ENCODE measurements at regions of chr10 and their contacts with region 1.

Region 1: GRCh38 chr10:119103903-119104652 is at the start of gene DENND10:
- DNase-seq: peak; percentile 90
- ATAC-seq: peak; percentile 92
- H3K4me3 Mint-ChIP-seq: peak within 1 kb of the TSS; percentile 70
- H3K27ac Mint-ChIP-seq: no peak within 1 kb of the TSS
- H3K4me1 Mint-ChIP-seq: peaks cover 10% of the 10 kb centered on the region
- H3K27me3 Mint-ChIP-seq: no peaks in the 10 kb centered on the region
- total RNA-seq, gene DENND10: 20.5 to 21.9 TPM

Region 2: GRCh38 chr10:119028900-119029612 is 75.0 kb before region 1 on chr10:
- CTCF ChIA-PET with region 1: no interaction called
- POLR2A ChIA-PET with region 1: no interaction called
- intact Hi-C with region 1: loop called in 1 of 2 experiments (anchors 1 kb)
- DNase-seq: peak; percentile 85
- ATAC-seq: peak; percentile 74
- H3K4me3 Mint-ChIP-seq: peak overlapping the region; percentile 47
- H3K27ac Mint-ChIP-seq: no peak overlapping the region
- H3K4me1 Mint-ChIP-seq: peaks cover 16% of the 10 kb centered on the region
- H3K27me3 Mint-ChIP-seq: no peaks in the 10 kb centered on the region

Region 3: DNA sequence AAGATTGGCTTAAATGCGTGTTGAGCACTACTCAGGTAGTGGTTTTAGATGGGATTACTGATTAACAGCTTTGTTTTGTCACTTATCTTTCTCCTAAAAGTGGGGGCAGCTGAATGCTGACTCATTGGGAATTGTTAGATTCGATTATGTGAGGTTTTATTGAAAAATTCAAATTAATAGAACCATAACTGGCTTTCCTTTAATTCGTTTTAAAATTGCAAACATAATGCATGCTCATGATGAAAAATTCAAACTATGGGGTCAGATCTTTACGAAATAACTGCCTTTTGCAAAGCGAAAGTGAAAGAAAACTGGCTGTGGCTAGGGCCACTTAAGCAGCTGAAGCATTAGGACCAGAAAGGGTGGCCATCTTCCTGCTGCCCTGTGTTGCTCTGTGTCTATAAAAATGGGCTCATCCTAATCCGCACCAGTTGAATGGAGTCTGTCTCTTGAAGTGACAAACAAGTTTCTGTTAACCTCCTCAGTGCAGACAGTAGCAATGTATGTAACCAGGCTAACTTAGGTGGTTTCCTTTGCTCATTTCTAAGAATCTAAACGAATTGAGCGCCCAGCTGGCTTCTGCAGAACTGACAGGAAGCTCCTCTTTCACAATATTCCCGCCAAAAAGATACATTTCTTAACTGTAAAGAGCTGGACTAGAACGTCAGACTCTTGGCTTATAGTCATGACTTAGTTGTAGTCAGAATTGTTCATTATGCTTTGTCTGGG is 27.6 kb after region 1 on chr10:
- CTCF ChIA-PET with region 1: interaction called, 5 read pairs
- POLR2A ChIA-PET with region 1: interaction called, 3 read pairs
- intact Hi-C with region 1: loop called in 1 of 2 experiments (anchors 1 kb)
- DNase-seq: peak; percentile 75
- ATAC-seq: peak; percentile 84
- H3K4me3 Mint-ChIP-seq: peak overlapping the region; percentile 78
- H3K27ac Mint-ChIP-seq: peak overlapping the region; percentile 99
- H3K4me1 Mint-ChIP-seq: peaks cover 50% of the 10 kb centered on the region
- H3K27me3 Mint-ChIP-seq: no peaks in the 10 kb centered on the region

Region 4: GRCh38 chr10:119178372-119179119 is 74.5 kb after region 1 on chr10 and contains the start of gene PRDX3:
- CTCF ChIA-PET with region 1: no interaction called
- POLR2A ChIA-PET with region 1: no interaction called
- intact Hi-C with region 1: loop called in 1 of 2 experiments (anchors 1 kb)
- DNase-seq: peak; percentile 98
- ATAC-seq: peak; percentile 95
- H3K4me3 Mint-ChIP-seq: peak within 1 kb of the TSS; percentile 88
- H3K27ac Mint-ChIP-seq: peak within 1 kb of the TSS; percentile 95
- H3K4me1 Mint-ChIP-seq: peaks cover 36% of the 10 kb centered on the region
- H3K27me3 Mint-ChIP-seq: no peaks in the 10 kb centered on the region
- total RNA-seq, gene PRDX3: 160 to 217 TPM

Region 5: GRCh38 chr10:119189811-119190282 is 85.8 kb after region 1 on chr10:
- CTCF ChIA-PET with region 1: no interaction called
- POLR2A ChIA-PET with region 1: no interaction called
- intact Hi-C with region 1: no loop called
- DNase-seq: no peak
- ATAC-seq: no peak
- H3K4me3 Mint-ChIP-seq: no peak overlapping the region
- H3K27ac Mint-ChIP-seq: no peak overlapping the region
- H3K4me1 Mint-ChIP-seq: peaks cover 21% of the 10 kb centered on the region
- H3K27me3 Mint-ChIP-seq: no peaks in the 10 kb centered on the region

Region 6: DNA sequence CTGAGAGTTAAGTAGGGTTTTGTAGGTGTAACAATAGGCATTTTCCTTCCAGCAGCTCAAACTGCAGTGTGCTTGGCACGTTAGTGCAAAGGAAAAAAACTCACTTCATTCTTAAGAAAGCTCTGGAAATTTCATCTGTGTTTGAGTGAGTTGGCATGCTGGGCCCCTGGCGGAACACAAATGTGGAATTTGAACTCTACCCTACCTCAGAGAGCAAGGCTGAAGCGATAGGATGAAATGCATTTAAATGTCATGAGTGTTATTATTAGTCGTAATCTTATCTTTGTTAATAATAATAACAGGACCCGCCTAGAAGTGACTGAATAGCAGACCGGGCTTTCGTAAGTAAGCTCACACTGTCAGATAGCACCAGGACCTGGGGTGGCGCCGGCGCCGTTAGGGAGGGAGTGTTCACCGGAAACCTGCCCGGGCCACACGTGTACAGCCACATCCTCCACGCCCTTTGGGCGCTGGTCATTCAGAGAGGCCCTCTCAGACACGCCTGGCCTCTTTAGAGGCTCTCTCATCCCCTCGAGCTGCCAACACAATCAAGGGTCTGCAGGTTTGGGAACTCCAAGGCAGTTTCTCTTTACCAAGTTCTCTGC is 166.8 kb after region 1 on chr10:
- CTCF ChIA-PET with region 1: no interaction called
- POLR2A ChIA-PET with region 1: no interaction called
- intact Hi-C with region 1: no loop called
- DNase-seq: peak; percentile 78
- ATAC-seq: peak; percentile 59
- H3K4me3 Mint-ChIP-seq: peak overlapping the region; percentile 34
- H3K27ac Mint-ChIP-seq: peak overlapping the region; percentile 77
- H3K4me1 Mint-ChIP-seq: peaks cover 58% of the 10 kb centered on the region
- H3K27me3 Mint-ChIP-seq: no peaks in the 10 kb centered on the region

Region 7: DNA sequence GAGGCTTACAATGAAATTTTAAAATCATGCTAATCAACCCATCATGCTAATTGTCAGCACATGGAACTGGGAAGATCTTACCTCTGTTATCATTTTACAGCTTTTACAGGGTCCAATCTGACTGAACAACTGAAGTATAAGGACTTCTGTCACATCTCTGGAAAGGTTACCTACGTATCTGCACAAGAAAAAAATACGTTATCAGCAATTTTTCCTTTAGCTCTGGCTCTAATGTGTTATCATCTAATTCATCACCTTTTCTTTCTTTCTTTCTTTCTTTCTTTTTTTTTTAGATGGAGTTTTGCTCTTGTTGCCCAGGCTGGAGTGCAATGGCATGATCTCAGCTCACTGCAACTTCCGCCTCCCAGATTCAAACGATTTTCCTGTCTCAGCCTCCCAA is 484.0 kb after region 1 on chr10:
- CTCF ChIA-PET with region 1: no interaction called
- POLR2A ChIA-PET with region 1: no interaction called
- intact Hi-C with region 1: no loop called
- DNase-seq: no peak
- ATAC-seq: no peak
- H3K4me3 Mint-ChIP-seq: no peak overlapping the region
- H3K27ac Mint-ChIP-seq: no peak overlapping the region
- H3K4me1 Mint-ChIP-seq: peaks cover 33% of the 10 kb centered on the region
- H3K27me3 Mint-ChIP-seq: no peaks in the 10 kb centered on the region